PC-3 (cell line): ENCODE measurements at regions of chr1 and their contacts with region 1.

Region 1: DNA sequence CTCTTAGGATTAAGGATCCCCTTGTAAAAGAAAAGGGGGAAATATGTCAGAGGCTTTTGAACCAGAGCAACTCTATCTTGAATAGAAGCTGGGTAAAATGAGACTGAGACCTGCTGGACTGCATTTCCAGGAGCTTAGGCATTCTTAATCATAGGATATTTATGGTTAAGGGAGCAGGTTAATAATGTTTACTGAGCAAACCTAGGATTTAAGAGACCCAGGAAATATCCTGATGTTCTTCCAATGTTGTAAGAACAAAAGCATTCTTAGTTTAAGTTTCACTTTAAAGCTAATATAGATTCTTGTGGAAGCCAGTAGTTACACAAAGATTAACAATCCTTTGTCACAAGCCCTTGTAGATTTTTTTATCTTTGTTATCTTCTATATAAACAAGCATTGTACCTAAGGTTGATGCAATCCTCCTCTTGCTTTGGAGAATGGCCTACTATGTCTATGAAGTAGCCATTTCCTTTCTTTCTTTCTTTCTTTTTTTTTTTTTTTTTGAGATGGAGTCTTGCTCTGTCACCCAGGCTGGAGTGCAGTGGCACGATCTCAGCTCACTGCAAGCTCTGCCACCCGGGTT is 570.2 kb upstream of the BEND5 start:
- DNase-seq: peak; percentile 95
- ATAC-seq: peak; percentile 90
- H3K4me3 ChIP-seq: 0 out of 2 replicates have a peak overlapping the region, but pooled peaks have one; percentile 8
- H3K27ac ChIP-seq: peak overlapping the region; percentile 92
- H3K4me1 ChIP-seq: peaks cover 51% of the 10 kb centered on the region
- H3K27me3 ChIP-seq: no peaks in the 10 kb centered on the region
- CTCF ChIP-seq: no peak

Region 2: GRCh38 chr1:48931506-48932251 is 415.2 kb before region 1 on chr1:
- CTCF ChIA-PET with region 1: no interaction called
- POLR2A ChIA-PET with region 1: no interaction called
- intact Hi-C with region 1: loop called (anchors 2 kb)
- DNase-seq: peak; percentile 91
- ATAC-seq: peak; percentile 77
- H3K4me3 ChIP-seq: peak overlapping the region; percentile 41; the same call in 1 of the 2 replicates
- H3K27ac ChIP-seq: peak overlapping the region; percentile 76
- H3K4me1 ChIP-seq: peaks cover 28% of the 10 kb centered on the region
- H3K27me3 ChIP-seq: no peaks in the 10 kb centered on the region
- CTCF ChIP-seq: no peak

Region 3: GRCh38 chr1:49163031-49163430 is 183.8 kb before region 1 on chr1:
- CTCF ChIA-PET with region 1: no interaction called
- POLR2A ChIA-PET with region 1: no interaction called
- intact Hi-C with region 1: loop called (anchors 5 kb)
- DNase-seq: peak; percentile 90
- ATAC-seq: peak; percentile 92
- H3K4me3 ChIP-seq: no peak overlapping the region
- H3K27ac ChIP-seq: peak overlapping the region; percentile 52
- H3K4me1 ChIP-seq: peaks cover 28% of the 10 kb centered on the region
- H3K27me3 ChIP-seq: no peaks in the 10 kb centered on the region
- CTCF ChIP-seq: no peak

Region 4: DNA sequence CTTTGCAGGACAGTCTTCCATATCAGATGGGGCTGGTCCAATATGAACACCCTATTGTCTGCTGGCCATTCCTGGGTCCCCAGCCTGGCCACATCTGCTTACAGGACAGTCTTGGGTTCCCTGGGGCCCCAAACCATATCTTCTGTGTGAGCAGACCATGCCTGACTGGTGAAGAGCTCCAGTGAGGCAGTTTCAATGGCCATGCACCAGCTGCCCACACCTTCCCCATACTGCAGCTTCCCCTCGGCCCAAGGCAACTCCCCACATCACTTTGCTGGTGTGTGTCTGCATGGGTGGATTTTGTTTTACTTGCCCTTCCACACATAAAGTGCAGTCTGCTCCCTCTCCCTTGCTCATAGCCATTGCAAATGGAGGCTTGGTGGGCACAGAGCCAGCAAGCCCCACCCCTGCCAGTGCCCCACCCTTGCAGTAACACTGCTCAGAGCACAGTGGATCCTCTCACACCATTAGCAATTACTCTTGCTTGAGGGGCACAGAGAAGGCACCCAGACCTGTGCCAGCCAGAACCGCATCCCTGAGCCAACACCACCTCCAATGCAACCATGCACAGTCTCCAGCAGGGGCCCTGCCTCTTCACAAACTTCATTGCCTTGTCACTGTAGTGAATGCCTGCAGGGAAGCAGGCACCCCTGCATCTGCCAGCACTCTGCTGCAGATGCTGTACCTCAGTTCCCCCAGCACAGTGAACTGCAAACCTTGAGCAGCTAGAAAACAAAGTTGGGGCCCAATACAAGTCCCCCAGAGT is 95.7 kb before region 1 on chr1:
- CTCF ChIA-PET with region 1: no interaction called
- POLR2A ChIA-PET with region 1: no interaction called
- intact Hi-C with region 1: no loop called
- DNase-seq: no peak
- ATAC-seq: no peak
- H3K4me3 ChIP-seq: no peak overlapping the region
- H3K27ac ChIP-seq: no peak overlapping the region
- H3K4me1 ChIP-seq: no peaks in the 10 kb centered on the region
- H3K27me3 ChIP-seq: no peaks in the 10 kb centered on the region
- CTCF ChIP-seq: no peak

Region 5: DNA sequence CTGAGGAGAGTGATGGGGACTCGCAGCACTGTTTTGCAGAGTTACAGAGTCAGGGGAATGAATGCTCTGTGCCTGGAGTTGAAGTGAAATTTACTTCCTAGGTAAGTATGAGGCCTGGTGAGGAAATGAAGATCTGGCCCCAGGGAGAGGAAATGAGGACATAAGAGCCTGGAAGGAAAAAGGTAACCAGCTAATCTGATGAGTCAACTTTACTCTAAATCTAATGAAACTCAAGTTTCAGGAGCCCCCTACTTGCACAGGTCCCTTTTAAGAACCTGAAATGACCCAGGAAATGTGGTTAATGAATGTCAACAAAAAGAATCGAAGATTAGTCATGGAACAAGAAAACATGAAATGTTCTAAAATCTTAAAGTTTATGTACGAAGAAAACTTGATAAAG is 77.9 kb after region 1 on chr1:
- CTCF ChIA-PET with region 1: no interaction called
- POLR2A ChIA-PET with region 1: no interaction called
- intact Hi-C with region 1: loop called (anchors 2 kb)
- DNase-seq: peak; percentile 92
- ATAC-seq: peak; percentile 91
- H3K4me3 ChIP-seq: peak overlapping the region; percentile 14; the same call in 1 of the 2 replicates
- H3K27ac ChIP-seq: peak overlapping the region; percentile 78
- H3K4me1 ChIP-seq: peaks cover 24% of the 10 kb centered on the region
- H3K27me3 ChIP-seq: no peaks in the 10 kb centered on the region
- CTCF ChIP-seq: no peak